Ascending aorta (tissue), 2 donors: ENCODE measurements at regions of chr20 and their contacts with region 1.

Region 1: GRCh38 chr20:58388882-58389323 is at the start of gene VAPB:
- DNase-seq: peak; percentile 69 to 96
- H3K4me3 ChIP-seq: peak within 1 kb of the TSS; percentile 73 to 79
- H3K27ac ChIP-seq: peak within 1 kb of the TSS; percentile 81 to 91
- H3K4me1 ChIP-seq: peaks cover 3 to 15% of the 10 kb centered on the region in 2 donors
- H3K27me3 ChIP-seq: no peaks in the 10 kb centered on the region
- CTCF ChIP-seq: no peak
- total RNA-seq, gene VAPB: 11.1 TPM

Region 2: DNA sequence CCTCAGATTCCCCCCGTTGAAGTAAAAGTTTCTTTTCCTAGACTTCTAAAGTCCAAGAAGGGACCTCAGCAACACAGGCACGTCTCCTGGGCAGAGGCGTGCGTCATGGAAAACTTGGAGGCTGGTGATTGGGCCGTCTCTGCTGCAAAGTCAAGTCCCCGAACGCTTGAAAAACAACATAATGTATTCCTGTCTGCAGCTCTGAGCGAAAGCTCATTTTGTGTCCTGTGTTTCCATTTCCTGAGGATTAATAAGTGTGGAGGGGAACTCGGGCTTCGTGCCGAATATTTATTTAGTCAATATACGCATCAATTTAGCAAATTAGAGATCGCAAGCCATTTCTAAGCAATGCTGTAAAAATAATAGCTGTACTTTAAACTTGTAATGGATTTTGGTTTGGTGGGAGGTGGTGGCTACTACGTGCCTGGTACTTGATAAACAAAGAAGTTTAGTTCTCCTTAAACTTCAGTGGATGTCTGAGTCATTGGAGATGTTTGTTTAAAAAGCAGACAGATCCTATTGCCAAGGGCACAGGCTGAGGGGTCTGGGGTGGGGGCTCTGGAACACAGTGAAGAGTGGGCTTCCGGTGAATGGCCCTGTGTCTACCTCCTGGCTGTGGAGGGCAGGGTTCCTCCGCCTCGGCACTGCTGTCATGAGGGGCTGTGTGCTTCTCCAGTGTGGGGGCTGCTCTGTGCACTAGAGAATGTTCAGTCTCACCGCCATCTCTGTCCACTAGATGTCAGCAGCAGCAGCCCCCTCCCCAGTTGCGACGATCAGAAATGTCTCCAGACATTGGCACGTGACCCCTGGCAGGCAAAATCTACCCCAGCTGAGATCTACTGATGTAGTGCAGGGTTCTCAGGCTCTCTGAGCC is 806.2 kb before region 1 on chr20:
- intact Hi-C with region 1: loop called (anchors 2 kb)
- DNase-seq: peak; percentile 31 to 87
- H3K4me3 ChIP-seq: peak overlapping the region; percentile 45 to 47
- H3K27ac ChIP-seq: peak overlapping the region; percentile 82 to 83
- H3K4me1 ChIP-seq: peaks cover 0 to 23% of the 10 kb centered on the region in 2 donors
- H3K27me3 ChIP-seq: no peaks in the 10 kb centered on the region
- CTCF ChIP-seq: peak; percentile 6 to 47 (median 43)

Region 3: DNA sequence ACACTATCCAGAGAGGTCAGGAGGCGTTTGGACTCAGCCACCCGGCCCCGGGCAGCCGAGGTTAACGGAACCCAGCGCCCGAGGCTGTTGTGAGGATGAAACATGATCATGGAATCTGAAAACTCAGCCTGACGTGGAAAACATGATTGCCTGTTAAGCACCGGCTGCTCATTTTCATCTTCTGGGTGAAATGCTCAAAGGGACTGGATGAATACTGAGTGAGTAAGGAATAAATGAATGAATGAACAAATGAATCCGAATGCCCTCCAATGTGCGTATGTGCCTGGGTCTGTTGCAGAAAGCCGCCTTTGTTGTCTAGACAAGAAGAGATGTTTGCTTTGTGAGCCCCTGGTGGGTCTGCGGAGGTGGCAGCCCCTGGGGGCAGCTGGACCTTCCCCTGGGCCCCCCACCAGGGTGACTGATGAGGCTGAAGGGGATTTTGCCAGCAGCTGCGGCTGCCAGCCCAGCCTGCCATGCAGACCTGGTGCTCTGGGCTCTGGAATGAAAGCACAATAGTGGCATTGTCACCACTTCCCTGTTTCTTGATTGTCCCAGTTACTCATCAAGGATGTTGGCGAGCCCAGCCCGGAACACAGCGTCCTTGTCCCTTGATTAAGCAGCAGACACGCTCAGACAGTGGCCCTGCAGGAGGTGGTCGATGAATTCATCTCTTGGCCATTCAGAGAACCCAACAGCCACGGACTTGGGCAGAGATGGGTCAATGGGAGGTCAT is 371.5 kb before region 1 on chr20:
- intact Hi-C with region 1: no loop called
- DNase-seq: peak in 1 of 2 donors; percentile 63
- H3K4me3 ChIP-seq: no peak overlapping the region
- H3K27ac ChIP-seq: no peak overlapping the region
- H3K4me1 ChIP-seq: peaks cover 12 to 20% of the 10 kb centered on the region in 2 donors
- H3K27me3 ChIP-seq: no peaks in the 10 kb centered on the region
- CTCF ChIP-seq: no peak

Region 4: DNA sequence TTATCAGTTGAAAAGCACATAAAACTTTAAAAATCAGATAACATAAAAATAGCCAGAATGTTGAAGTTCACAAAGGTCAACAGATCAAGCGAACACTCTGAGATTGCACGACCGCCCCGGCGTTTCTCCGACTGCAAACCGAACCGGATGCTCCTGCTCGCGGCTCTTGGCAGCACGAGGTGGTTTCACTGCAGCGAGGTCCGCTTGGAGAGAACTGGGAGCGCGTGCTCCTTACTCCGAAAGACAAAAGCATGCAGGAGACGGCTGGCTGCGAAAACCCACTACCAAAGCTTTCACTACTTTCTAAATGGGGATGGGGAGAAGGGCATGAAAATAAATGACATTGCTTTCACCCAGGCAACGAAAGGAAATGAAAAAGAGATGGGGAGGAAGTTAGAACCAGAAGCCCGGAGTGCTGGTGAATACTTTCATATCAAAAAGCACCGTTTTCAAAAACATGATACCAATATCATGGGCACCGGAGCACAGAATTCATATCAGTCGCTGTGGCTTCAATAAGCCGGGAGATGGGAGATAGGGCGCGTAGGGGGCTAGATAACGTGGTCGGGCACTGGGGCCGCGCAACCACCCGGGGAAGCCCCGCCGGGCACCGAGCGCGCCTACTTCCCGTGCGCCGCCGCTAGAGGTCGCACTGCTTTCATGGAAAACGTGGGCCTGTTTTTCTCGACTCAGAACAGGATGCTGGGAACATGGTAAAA is 152.1 kb before region 1 on chr20:
- intact Hi-C with region 1: loop called (anchors 10 kb)
- DNase-seq: peak in 1 of 2 donors; percentile 85
- H3K4me3 ChIP-seq: peak overlapping the region; percentile 49 to 58
- H3K27ac ChIP-seq: peak overlapping the region; percentile 14 to 45
- H3K4me1 ChIP-seq: peaks cover 0 to 2% of the 10 kb centered on the region in 2 donors
- H3K27me3 ChIP-seq: no peaks in the 10 kb centered on the region
- CTCF ChIP-seq: peak; percentile 84 to 94 (median 94)

Region 5: GRCh38 chr20:58309575-58310290 is 79.2 kb before region 1 on chr20 and contains the start of gene RAB22A:
- intact Hi-C with region 1: loop called (anchors 1 kb)
- DNase-seq: peak in 1 of 2 donors; percentile 89
- H3K4me3 ChIP-seq: peak within 1 kb of the TSS; percentile 80 to 90
- H3K27ac ChIP-seq: peak within 1 kb of the TSS; percentile 78 to 82
- H3K4me1 ChIP-seq: peaks cover 0 to 6% of the 10 kb centered on the region in 2 donors
- H3K27me3 ChIP-seq: no peaks in the 10 kb centered on the region
- CTCF ChIP-seq: no peak
- total RNA-seq, gene RAB22A: 17.8 TPM

Region 6: DNA sequence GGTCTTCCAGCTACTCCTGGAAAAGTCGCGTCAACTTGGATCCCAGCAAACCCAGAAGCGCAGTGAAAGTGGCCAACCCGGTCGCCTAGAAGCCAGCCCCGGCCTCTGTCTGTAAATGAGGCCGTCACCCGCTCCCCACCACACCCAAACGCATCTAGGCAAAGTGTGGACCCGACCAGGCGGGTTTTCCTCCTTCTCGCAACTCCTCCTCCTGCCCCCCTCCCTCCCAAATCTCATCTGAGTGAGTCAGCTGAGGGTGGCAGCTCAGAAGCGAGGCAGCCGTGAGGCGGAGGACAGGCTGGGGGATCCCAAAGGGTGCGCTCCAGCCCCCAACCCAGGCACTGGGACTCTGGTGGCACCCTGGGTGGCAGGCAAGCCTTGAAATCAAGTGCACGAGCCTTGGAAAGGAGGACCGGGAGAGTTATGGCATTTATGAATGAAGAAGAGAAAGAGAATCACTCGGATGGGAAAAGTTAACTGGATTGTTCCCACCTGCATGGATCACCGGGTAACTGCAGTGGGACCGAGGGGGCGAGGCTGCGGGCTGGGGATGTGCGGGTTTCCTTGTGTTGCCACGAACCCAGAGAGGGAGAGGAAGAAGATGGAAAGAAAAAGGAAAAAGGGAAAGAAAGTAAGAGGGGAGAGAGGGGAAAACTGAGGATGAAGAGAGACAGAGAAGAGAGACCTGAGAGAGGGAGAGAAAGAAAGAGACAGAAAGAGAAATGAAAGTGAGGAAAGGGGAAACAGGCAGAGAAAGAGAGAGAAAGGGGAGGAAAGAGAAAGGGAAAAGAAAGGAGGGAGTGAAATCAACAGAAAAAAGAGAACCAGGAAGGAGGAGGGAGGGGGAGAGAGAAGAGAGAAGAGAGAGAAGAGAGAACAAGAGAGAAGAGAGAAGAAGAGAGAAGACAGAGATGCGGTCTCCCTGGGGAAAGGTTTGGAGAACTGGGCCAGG is 126.6 kb after region 1 on chr20 and contains the start of gene APCDD1L:
- intact Hi-C with region 1: loop called (anchors 1 kb)
- DNase-seq: peak in 1 of 2 donors; percentile 76
- H3K4me3 ChIP-seq: peak within 1 kb of the TSS; percentile 41 to 63
- H3K27ac ChIP-seq: peak within 1 kb of the TSS; percentile 2 to 48
- H3K4me1 ChIP-seq: peaks cover 7 to 15% of the 10 kb centered on the region in 2 donors
- H3K27me3 ChIP-seq: no peaks in the 10 kb centered on the region
- CTCF ChIP-seq: no peak
- total RNA-seq, gene APCDD1L: 2.1 TPM

Region 7: GRCh38 chr20:58692594-58693226 is 303.8 kb after region 1 on chr20 and contains the start of gene NPEPL1:
- intact Hi-C with region 1: loop called (anchors 2 kb)
- DNase-seq: peak in 1 of 2 donors; percentile 78
- H3K4me3 ChIP-seq: peak within 1 kb of the TSS; percentile 52 to 81
- H3K27ac ChIP-seq: peak within 1 kb of the TSS; percentile 90 to 96
- H3K4me1 ChIP-seq: peaks cover 12 to 22% of the 10 kb centered on the region in 2 donors
- H3K27me3 ChIP-seq: no peaks in the 10 kb centered on the region
- CTCF ChIP-seq: peak in 1 of 3 experiments; percentile 54
- total RNA-seq, gene NPEPL1: 68.3 TPM